Sigmoid colon (tissue), 7 donors: ENCODE measurements at regions of chr10 and their contacts with region 1.

Region 1: GRCh38 chr10:4663162-4663904 is 162.7 kb upstream of the AKR1E2 start:
- DNase-seq: peak; percentile 92
- H3K4me3 ChIP-seq: peak overlapping the region in 1 of 4 donors; percentile 21
- H3K27ac ChIP-seq: peak overlapping the region; percentile 76 to 93 (median 84)
- H3K4me1 ChIP-seq: peaks cover 0 to 31% (median 28%) of the 10 kb centered on the region in 4 donors
- H3K27me3 ChIP-seq: no peaks in the 10 kb centered on the region
- CTCF ChIP-seq: no peak
- EP300 ChIP-seq: peak; percentile 80 to 99 (median 92)
- POLR2A ChIP-seq: no peak

Region 2: GRCh38 chr10:3467052-3467951 is 1196.0 kb before region 1 on chr10:
- intact Hi-C with region 1: loop called (anchors 10 kb)
- DNase-seq: peak; percentile 88
- H3K4me3 ChIP-seq: peak overlapping the region in 2 of 4 donors; percentile 2 to 8
- H3K27ac ChIP-seq: peak overlapping the region; percentile 83 to 91 (median 90)
- H3K4me1 ChIP-seq: peaks cover 0 to 68% (median 67%) of the 10 kb centered on the region in 4 donors
- H3K27me3 ChIP-seq: no peaks in the 10 kb centered on the region
- CTCF ChIP-seq: no peak
- EP300 ChIP-seq: peak in 2 of 4 donors; percentile 6 to 45
- POLR2A ChIP-seq: no peak

Region 3: GRCh38 chr10:3636356-3637181 is 1026.8 kb before region 1 on chr10:
- intact Hi-C with region 1: no loop called
- DNase-seq: no peak
- H3K4me3 ChIP-seq: no peak overlapping the region
- H3K27ac ChIP-seq: no peak overlapping the region
- H3K4me1 ChIP-seq: no peaks in the 10 kb centered on the region
- H3K27me3 ChIP-seq: no peaks in the 10 kb centered on the region
- CTCF ChIP-seq: no peak
- EP300 ChIP-seq: no peak
- POLR2A ChIP-seq: no peak

Region 4: GRCh38 chr10:4061441-4061951 is 601.8 kb before region 1 on chr10:
- intact Hi-C with region 1: loop called (anchors 5 kb)
- DNase-seq: peak; percentile 91
- H3K4me3 ChIP-seq: no peak overlapping the region
- H3K27ac ChIP-seq: peak overlapping the region; percentile 65 to 83 (median 74)
- H3K4me1 ChIP-seq: peaks cover 0 to 47% (median 44%) of the 10 kb centered on the region in 4 donors
- H3K27me3 ChIP-seq: no peaks in the 10 kb centered on the region
- CTCF ChIP-seq: no peak
- EP300 ChIP-seq: no peak
- POLR2A ChIP-seq: no peak

Region 5: GRCh38 chr10:4195213-4195612 is 468.1 kb before region 1 on chr10:
- intact Hi-C with region 1: loop called (anchors 5 kb)
- DNase-seq: no peak
- H3K4me3 ChIP-seq: no peak overlapping the region
- H3K27ac ChIP-seq: peak overlapping the region in 2 of 4 donors; percentile 74 to 83
- H3K4me1 ChIP-seq: peaks cover 0 to 33% (median 26%) of the 10 kb centered on the region in 4 donors
- H3K27me3 ChIP-seq: no peaks in the 10 kb centered on the region
- CTCF ChIP-seq: no peak
- EP300 ChIP-seq: no peak
- POLR2A ChIP-seq: no peak

Region 6: DNA sequence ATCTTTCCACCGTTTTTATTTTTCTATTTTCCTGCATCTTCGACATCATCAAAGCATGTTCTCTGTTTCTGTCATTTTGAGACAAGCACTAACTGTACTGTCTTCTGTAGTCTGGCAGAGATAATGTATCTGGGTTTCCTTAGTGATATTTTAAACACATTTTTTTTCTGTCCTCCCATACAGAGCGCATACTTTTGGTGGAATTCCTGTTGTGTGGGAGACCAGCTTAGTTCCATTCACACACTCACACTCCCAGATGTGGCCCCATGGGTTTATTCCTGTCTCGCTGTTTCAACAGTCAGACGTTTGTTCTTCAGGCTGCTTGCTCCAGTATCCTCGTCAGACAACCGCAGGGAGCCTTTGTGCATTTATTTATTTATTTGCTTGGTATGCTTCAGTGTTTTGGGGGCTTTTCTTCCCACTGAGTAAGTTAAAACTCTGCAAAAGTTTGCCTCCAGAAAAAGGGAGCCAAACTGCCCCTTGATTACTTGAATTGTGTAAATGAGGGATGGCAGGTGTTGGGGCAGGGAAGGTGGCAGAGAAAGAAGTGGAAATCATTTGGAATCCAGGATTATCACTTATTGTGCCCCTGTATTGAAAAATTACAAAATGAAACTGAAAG is 421.5 kb before region 1 on chr10:
- intact Hi-C with region 1: loop called (anchors 5 kb)
- DNase-seq: no peak
- H3K4me3 ChIP-seq: peak overlapping the region in 3 of 4 donors; percentile 31 to 47 (median 34)
- H3K27ac ChIP-seq: peak overlapping the region; percentile 82 to 88 (median 87)
- H3K4me1 ChIP-seq: peaks cover 0 to 57% (median 32%) of the 10 kb centered on the region in 4 donors
- H3K27me3 ChIP-seq: no peaks in the 10 kb centered on the region
- CTCF ChIP-seq: no peak
- EP300 ChIP-seq: peak in 3 of 4 donors; percentile 49 to 87 (median 51)
- POLR2A ChIP-seq: no peak

Region 7: DNA sequence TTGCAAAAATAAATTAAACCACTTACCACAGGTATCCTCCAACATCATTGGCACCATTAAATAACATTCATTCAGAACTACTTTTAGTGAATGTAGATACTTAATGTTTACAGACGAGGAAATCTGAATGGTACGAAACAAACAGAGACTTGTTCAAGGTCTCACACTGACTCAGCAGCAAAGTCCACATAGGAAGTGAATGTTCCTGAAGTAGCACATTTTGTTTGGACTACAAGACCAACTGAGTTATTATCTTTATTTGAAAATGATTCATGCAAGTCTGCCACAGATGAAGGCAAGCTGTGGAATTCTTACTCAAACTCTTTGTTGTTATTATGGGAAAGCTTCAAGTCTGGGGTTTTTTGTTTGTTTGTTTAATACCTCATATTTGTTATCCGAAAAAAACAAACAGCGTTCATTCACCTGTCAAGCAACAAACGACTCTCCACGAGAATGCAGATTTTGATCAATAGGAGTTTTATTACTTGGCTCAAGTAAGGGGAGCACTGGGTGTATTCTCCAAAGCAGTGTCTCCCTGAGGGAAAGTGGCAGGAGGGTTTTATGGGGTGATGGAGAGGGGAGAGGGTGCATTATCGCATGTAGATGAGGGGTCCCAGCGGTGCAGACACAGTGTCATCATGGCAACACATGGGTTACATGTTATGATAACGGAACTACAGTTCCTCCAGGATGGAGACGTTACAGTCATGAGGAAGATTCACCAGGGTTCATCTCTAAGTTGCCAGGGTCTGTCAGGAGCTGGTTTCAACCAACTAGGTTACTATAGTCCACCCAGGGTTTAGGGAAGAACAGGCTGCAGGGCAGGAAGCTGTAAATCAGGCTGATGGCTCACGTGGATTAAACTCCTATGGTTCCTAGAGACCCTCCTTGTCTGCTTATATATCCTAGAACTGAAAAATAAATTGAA is 15.0 kb after region 1 on chr10:
- intact Hi-C with region 1: no loop called
- DNase-seq: no peak
- H3K4me3 ChIP-seq: no peak overlapping the region
- H3K27ac ChIP-seq: peak overlapping the region in 3 of 4 donors; percentile 70 to 77 (median 77)
- H3K4me1 ChIP-seq: peaks cover 0 to 18% (median 10%) of the 10 kb centered on the region in 4 donors
- H3K27me3 ChIP-seq: no peaks in the 10 kb centered on the region
- CTCF ChIP-seq: no peak
- EP300 ChIP-seq: peak in 1 of 4 donors; percentile 36
- POLR2A ChIP-seq: no peak

Region 8: DNA sequence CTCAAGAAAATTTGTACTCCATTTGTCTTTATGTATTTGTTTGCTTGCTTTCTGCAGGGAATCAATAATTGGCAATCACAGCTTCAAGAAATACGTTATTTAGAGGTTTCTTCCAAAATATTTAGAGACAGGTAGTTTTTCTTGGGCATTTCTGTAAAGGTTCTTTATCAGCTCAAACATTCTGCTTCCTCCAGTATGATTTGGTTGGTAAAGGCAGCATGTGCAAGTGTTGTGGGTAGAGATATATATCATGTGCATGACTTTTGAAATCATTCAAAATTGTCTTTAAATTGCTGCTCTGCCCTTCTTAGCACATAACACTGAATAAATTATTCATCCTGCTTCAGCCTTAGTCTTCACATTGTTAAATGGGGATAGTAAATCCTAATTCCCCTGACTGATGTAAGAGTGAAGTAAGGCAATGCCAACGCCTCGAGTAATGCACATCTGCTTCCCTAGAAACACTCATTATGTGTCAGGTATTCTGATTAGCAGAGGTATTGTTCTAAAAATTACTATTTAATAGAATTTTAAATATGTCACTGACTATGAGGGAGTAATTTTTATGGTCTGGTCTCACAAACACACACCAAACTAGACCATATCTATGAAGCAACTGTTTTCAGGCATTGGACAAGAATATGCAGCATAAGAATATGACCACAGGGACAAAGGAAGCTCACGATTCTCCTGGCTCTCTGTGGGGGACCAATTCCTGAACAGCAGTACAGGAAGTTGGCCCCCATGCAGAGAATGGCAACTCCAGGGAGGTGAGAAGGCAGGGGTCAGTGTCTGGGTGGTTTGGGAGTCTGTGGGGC is 85.4 kb after region 1 on chr10:
- intact Hi-C with region 1: no loop called
- DNase-seq: no peak
- H3K4me3 ChIP-seq: no peak overlapping the region
- H3K27ac ChIP-seq: no peak overlapping the region
- H3K4me1 ChIP-seq: no peaks in the 10 kb centered on the region
- H3K27me3 ChIP-seq: no peaks in the 10 kb centered on the region
- CTCF ChIP-seq: no peak
- EP300 ChIP-seq: no peak
- POLR2A ChIP-seq: no peak